H1 (cell line): ENCODE measurements at regions of chr3 and their contacts with region 1.

Region 1: GRCh38 chr3:186849374-186849975 is 7.0 kb downstream of the ADIPOQ start:
- DNase-seq: no peak
- H3K4me3 ChIP-seq: no peak overlapping the region
- H3K27ac ChIP-seq: no peak overlapping the region
- H3K4me1 ChIP-seq: no peaks in the 10 kb centered on the region
- H3K27me3 ChIP-seq: no peaks in the 10 kb centered on the region
- CTCF ChIP-seq: peak in 2 of 3 experiments; percentile 49 to 71; a peak in 3 of 4 replicates
- EP300 ChIP-seq: no peak
- POLR2A ChIP-seq: no peak
- RAD21 ChIP-seq: peak; percentile 84

Region 2: DNA sequence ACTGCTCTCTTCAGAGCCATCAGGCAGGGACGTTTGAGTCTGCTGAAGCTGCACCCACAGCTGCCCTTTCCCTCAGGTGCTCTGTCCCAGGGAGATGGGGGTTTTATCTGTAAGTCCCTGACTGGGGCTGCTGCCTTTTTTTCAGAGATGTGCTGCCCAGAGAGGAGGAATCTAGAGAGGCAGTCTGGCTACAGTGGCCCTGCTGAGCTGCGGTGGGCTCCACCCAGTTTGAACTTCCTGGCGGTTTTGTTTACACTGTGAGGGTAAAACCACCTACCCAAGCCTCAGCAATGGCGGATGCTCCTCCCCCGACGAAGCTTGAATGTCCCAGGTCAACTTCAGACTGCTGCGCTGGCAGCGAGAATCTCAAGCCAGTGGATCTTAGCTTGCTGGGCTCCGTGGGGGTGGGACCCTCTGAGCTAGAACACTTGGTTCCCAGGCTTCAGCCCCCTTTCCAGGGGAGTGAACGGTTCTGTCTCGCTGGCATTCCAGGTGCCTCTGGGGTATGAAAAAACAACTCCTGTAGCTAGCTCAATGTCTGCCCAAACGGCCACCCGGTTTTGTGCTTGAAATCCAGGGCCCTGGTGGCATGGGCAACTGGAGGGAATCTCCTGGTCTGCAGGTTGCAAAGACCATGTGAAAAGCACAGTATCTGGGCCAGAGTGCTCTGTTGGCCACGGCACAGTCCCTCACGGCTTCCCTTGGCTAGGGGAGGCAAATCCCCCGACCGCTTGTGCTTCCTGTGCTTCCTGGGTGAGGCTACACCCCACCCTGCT is 59.8 kb after region 1 on chr3:
- CTCF ChIA-PET with region 1: interaction called, 11 read pairs
- POLR2A ChIA-PET with region 1: no interaction called
- DNase-seq: no peak
- H3K4me3 ChIP-seq: no peak overlapping the region
- H3K27ac ChIP-seq: peak overlapping the region; percentile 36; the same call in 1 of the 2 replicates
- H3K4me1 ChIP-seq: peaks cover 0 to 9% (median 0%) of the 10 kb centered on the region in 4 experiments; a peak in 4 of 7 replicates
- H3K27me3 ChIP-seq: no peaks in the 10 kb centered on the region
- CTCF ChIP-seq: no peak
- EP300 ChIP-seq: no peak
- POLR2A ChIP-seq: no peak
- RAD21 ChIP-seq: no peak

Region 3: GRCh38 chr3:186930641-186931531 is 81.4 kb after region 1 on chr3:
- CTCF ChIA-PET with region 1: interaction called, 22 read pairs
- POLR2A ChIA-PET with region 1: interaction called, 6 read pairs
- DNase-seq: peak; percentile 79 to 82
- H3K4me3 ChIP-seq: peak overlapping the region; percentile 76 to 89 (median 80)
- H3K27ac ChIP-seq: peak overlapping the region; percentile 84
- H3K4me1 ChIP-seq: peaks cover 10 to 17% (median 14%) of the 10 kb centered on the region in 4 experiments; a peak in 6 of 7 replicates
- H3K27me3 ChIP-seq: peaks cover 0 to 6% (median 0%) of the 10 kb centered on the region in 4 experiments; a peak in 2 of 7 replicates
- CTCF ChIP-seq: peak in 2 of 3 experiments; percentile 18 to 20; a peak in 3 of 4 replicates
- EP300 ChIP-seq: no peak
- POLR2A ChIP-seq: no peak; a peak in 1 of 3 replicates
- RAD21 ChIP-seq: peak; percentile 11 to 23; a peak in 2 of 4 replicates

Region 4: GRCh38 chr3:186959029-186959624 is 109.7 kb after region 1 on chr3:
- CTCF ChIA-PET with region 1: interaction called, 12 read pairs
- POLR2A ChIA-PET with region 1: interaction called, 4 read pairs
- DNase-seq: no peak
- H3K4me3 ChIP-seq: no peak overlapping the region
- H3K27ac ChIP-seq: no peak overlapping the region
- H3K4me1 ChIP-seq: peaks cover 6 to 25% (median 18%) of the 10 kb centered on the region in 4 experiments; a peak in 6 of 7 replicates
- H3K27me3 ChIP-seq: no peaks in the 10 kb centered on the region
- CTCF ChIP-seq: no peak
- EP300 ChIP-seq: no peak
- POLR2A ChIP-seq: no peak
- RAD21 ChIP-seq: no peak

Region 5: GRCh38 chr3:187066228-187066995 is 216.9 kb after region 1 on chr3:
- CTCF ChIA-PET with region 1: interaction called, 20 read pairs
- POLR2A ChIA-PET with region 1: no interaction called
- DNase-seq: peak; percentile 49 to 64
- H3K4me3 ChIP-seq: no peak overlapping the region
- H3K27ac ChIP-seq: no peak overlapping the region
- H3K4me1 ChIP-seq: peaks cover 6 to 20% (median 9%) of the 10 kb centered on the region in 4 experiments; a peak in 5 of 7 replicates
- H3K27me3 ChIP-seq: no peaks in the 10 kb centered on the region
- CTCF ChIP-seq: peak; percentile 65 to 85 (median 78)
- EP300 ChIP-seq: no peak
- POLR2A ChIP-seq: peak in 1 of 2 experiments; percentile 31; a peak in 1 of 3 replicates
- RAD21 ChIP-seq: peak; percentile 61 to 72

Region 6: DNA sequence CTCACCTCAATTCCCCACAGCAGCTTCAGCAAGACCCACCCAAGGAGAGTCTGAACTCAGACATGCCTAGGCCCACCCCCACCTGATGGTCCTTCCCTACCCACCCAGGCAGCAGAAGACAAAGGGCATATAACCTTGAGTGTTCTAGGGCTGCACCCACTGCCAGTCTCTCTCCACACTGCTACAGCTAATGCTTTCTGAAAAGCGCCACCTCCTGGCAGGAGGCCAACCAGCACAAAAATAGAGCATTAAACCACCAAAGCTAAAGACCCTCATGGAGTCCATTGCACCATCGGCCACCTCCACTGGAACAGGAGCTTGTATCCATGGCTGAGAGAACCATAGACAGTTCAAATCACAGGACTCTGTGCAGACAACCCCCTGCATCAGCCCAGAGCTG is 301.1 kb after region 1 on chr3:
- CTCF ChIA-PET with region 1: interaction called, 13 read pairs
- POLR2A ChIA-PET with region 1: no interaction called
- DNase-seq: peak in 1 of 2 experiments; percentile 77
- H3K4me3 ChIP-seq: no peak overlapping the region
- H3K27ac ChIP-seq: no peak overlapping the region
- H3K4me1 ChIP-seq: no peaks in the 10 kb centered on the region
- H3K27me3 ChIP-seq: no peaks in the 10 kb centered on the region
- CTCF ChIP-seq: peak; percentile 32 to 63 (median 47)
- EP300 ChIP-seq: no peak
- POLR2A ChIP-seq: no peak
- RAD21 ChIP-seq: peak; percentile 22 to 34; a peak in 3 of 4 replicates